ENCODE measurements at regions of chr3 and their contacts with region 1.

Region 1: DNA sequence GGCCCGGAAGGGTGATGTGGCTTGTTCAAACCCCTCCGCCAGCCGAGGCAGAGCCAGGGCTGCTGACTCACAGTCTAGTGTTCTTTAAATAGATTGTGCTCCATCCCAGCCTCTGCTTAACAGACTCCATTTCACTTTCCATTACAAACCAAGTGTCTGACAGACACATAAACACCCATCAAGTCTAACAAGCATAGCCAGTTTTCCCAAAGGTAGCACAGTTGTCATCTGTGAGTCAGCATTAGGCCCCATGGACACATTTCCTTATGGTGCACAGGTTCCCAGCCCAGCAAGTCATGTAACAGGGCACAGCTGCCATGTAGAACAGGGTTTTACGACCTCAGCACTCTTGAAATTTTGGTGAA is 109.9 kb upstream of the RAP2B start:
- DNase-seq: peak; percentile 91
- H3K4me3 ChIP-seq: no peak overlapping the region
- H3K27ac ChIP-seq: peak overlapping the region; percentile 95
- H3K4me1 ChIP-seq: peaks cover 22% of the 10 kb centered on the region
- H3K27me3 ChIP-seq: no peaks in the 10 kb centered on the region
- CTCF ChIP-seq: no peak
- POLR2A ChIP-seq: no peak

Region 2: GRCh38 chr3:151989621-151990020 is 1062.5 kb before region 1 on chr3:
- CTCF ChIA-PET with region 1: no interaction called
- POLR2A ChIA-PET with region 1: no interaction called
- dilution Hi-C with region 1: no loop called
- intact Hi-C with region 1: no loop called
- DNase-seq: no peak
- H3K4me3 ChIP-seq: no peak overlapping the region
- H3K27ac ChIP-seq: no peak overlapping the region
- H3K4me1 ChIP-seq: no peaks in the 10 kb centered on the region
- H3K27me3 ChIP-seq: no peaks in the 10 kb centered on the region
- CTCF ChIP-seq: no peak
- POLR2A ChIP-seq: no peak

Region 3: DNA sequence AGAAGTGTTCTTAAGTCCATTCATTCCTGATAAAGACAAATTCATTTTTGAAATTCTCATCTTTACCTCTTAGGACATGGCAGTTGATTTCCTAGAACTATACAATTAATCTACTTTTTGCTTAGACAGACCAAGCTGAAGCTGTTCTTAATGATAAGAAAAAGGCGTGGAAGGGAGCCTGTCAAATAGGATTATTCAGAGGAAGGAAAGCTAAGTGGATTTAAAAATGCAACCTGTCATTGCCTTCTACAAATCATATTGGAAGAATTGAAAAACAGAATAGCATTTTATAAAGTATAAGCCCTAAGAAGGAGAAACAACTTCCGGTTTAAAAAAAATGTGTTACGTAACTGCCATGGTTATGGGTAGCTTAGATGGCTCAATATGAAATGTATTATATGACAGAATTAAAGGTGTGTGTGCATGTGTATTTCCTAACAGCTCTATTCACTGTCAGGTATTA is 28.7 kb after region 1 on chr3:
- CTCF ChIA-PET with region 1: no interaction called
- POLR2A ChIA-PET with region 1: no interaction called
- dilution Hi-C with region 1: no loop called
- intact Hi-C with region 1: no loop called
- DNase-seq: no peak
- H3K4me3 ChIP-seq: no peak overlapping the region
- H3K27ac ChIP-seq: no peak overlapping the region
- H3K4me1 ChIP-seq: peaks cover 12% of the 10 kb centered on the region
- H3K27me3 ChIP-seq: no peaks in the 10 kb centered on the region
- CTCF ChIP-seq: no peak
- POLR2A ChIP-seq: no peak

Region 4: DNA sequence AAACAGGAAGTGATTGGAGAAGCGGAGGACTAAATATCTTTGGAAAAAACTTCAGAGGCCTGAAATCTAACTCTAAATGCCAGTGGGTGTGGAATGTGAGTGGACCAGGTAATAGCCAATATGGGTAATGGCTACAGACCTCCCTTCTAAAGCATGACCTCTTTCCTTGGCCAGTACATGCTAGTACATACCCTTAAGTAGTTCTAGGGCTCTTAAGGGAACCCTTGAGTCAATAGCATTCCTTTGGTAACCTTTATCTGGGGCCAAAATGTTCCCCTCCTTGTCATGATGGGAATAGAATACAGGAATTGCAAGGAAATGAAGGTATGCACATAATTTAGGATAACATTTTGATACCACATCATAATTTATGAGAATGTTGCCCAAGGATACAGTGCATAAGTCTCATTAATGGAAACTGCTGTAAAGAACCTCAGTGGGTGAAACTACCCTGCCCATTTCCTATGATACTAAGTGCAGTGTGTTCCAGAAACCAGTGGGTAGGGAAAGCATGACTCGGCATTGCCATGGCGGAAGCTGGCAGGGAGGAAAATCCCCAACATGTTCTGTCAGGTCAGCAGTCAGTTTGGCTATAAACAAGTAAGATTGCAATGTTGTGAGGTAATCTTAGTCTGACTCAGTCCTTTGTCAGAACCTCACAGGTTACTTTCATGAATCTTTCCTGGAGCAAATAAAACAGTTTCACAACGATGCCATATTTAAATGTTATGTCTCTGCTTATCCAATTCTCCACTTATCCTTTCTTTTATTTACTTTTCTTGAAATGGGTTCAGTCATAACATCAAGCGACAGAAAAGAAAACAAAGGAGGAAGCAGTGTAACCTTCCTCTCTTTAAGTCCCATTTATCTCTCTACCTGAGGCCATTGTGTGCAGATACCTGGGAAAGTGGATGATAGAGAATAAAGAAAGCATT is 86.5 kb after region 1 on chr3:
- CTCF ChIA-PET with region 1: interaction called, 4 read pairs
- POLR2A ChIA-PET with region 1: no interaction called
- dilution Hi-C with region 1: no loop called
- intact Hi-C with region 1: loop called (anchors 1 kb)
- DNase-seq: peak; percentile 97
- H3K4me3 ChIP-seq: no peak overlapping the region
- H3K27ac ChIP-seq: peak overlapping the region; percentile 97
- H3K4me1 ChIP-seq: peaks cover 30% of the 10 kb centered on the region
- H3K27me3 ChIP-seq: no peaks in the 10 kb centered on the region
- CTCF ChIP-seq: no peak
- POLR2A ChIP-seq: peak; percentile 49

Region 5: GRCh38 chr3:153144779-153145178 is 92.7 kb after region 1 on chr3:
- CTCF ChIA-PET with region 1: interaction called, 4 read pairs
- POLR2A ChIA-PET with region 1: no interaction called
- dilution Hi-C with region 1: no loop called
- intact Hi-C with region 1: loop called (anchors 1 kb)
- DNase-seq: peak; percentile 64
- H3K4me3 ChIP-seq: peak overlapping the region in 1 of 3 experiments; percentile 28
- H3K27ac ChIP-seq: peak overlapping the region; percentile 45
- H3K4me1 ChIP-seq: peaks cover 34% of the 10 kb centered on the region
- H3K27me3 ChIP-seq: no peaks in the 10 kb centered on the region
- CTCF ChIP-seq: no peak
- POLR2A ChIP-seq: no peak

Region 6: GRCh38 chr3:153835540-153835939 is 783.5 kb after region 1 on chr3:
- CTCF ChIA-PET with region 1: no interaction called
- POLR2A ChIA-PET with region 1: no interaction called
- dilution Hi-C with region 1: no loop called
- intact Hi-C with region 1: no loop called
- DNase-seq: no peak
- H3K4me3 ChIP-seq: no peak overlapping the region
- H3K27ac ChIP-seq: no peak overlapping the region
- H3K4me1 ChIP-seq: peaks cover 6% of the 10 kb centered on the region
- H3K27me3 ChIP-seq: no peaks in the 10 kb centered on the region
- CTCF ChIP-seq: no peak
- POLR2A ChIP-seq: no peak

Measured in endothelial cell of umbilical vein (primary cell).